ENCODE measurements at regions of chr2 and their contacts with region 1.

Region 1: GRCh38 chr2:181785691-181786344 is 105.5 kb upstream of the NEUROD1 start:
- DNase-seq: peak; percentile 78
- ATAC-seq: peak; percentile 23; the same call in 1 of the 2 replicates
- H3K4me3 ChIP-seq: no peak overlapping the region
- H3K27ac ChIP-seq: peak overlapping the region; percentile 92
- H3K4me1 ChIP-seq: peaks cover 83 to 100% of the 10 kb centered on the region in 2 experiments
- H3K27me3 ChIP-seq: no peaks in the 10 kb centered on the region
- CTCF ChIP-seq: no peak
- POLR2A ChIP-seq: no peak
- RAD21 ChIP-seq: no peak; the same call in 1 of the 2 replicates

Region 2: DNA sequence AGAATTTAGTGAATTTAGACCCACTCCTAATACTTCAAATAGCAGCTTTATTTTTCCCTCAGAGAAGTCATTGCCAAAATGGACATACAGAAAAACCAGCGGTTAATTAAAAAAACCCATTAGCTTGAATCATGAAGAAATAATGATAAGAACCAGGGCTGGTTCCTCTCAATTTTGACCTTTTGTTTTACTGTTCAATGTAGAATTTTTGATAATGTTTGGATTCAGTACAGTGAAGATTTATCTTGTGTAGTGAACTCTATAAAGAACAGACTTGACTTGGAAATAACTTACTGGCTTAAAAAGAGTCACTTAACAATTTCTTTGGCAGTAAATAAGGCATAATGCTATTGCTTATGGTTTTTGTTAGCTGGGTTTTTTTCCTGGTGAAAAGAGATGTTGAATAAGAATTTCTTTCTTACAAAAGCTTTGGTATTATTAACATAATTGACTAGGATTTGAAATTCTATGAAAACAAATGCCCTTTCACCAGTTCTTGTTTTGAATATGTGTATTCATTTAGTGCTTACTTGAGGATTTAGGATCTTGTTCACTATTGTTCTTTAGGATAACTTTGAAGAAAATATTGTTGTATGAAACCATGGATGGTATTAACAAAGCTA is 32.4 kb after region 1 on chr2:
- CTCF ChIA-PET with region 1: no interaction called
- POLR2A ChIA-PET with region 1: interaction called, 10 read pairs
- RAD21 ChIA-PET with region 1: no interaction called
- intact Hi-C with region 1: no loop called
- DNase-seq: no peak
- ATAC-seq: no peak
- H3K4me3 ChIP-seq: no peak overlapping the region
- H3K27ac ChIP-seq: peak overlapping the region; percentile 59; the same call in 1 of the 2 replicates
- H3K4me1 ChIP-seq: peaks cover 67 to 87% of the 10 kb centered on the region in 2 experiments
- H3K27me3 ChIP-seq: no peaks in the 10 kb centered on the region
- CTCF ChIP-seq: no peak
- POLR2A ChIP-seq: no peak
- RAD21 ChIP-seq: no peak

Region 3: DNA sequence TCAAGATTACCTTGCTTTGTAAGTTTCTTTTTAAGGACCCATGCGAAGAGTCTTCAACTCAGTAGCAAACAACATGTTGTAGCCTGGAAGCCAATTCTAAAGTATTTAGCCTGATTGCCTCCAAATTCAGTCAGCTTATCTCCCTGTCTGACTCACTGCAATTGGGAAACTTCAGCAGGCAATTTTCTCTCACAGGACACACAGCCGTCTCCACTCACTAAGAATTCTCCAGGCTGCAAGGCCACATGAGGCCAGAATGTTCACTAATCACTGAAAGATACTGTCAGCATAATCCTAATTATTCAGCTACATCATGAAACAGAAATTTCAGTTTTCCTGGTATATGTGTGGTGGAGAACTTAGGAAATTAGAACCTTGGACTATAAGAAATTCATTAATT is 719.1 kb after region 1 on chr2:
- CTCF ChIA-PET with region 1: no interaction called
- POLR2A ChIA-PET with region 1: no interaction called
- RAD21 ChIA-PET with region 1: no interaction called
- intact Hi-C with region 1: no loop called
- DNase-seq: no peak
- ATAC-seq: no peak
- H3K4me3 ChIP-seq: no peak overlapping the region
- H3K27ac ChIP-seq: no peak overlapping the region
- H3K4me1 ChIP-seq: no peaks in the 10 kb centered on the region
- H3K27me3 ChIP-seq: no peaks in the 10 kb centered on the region
- CTCF ChIP-seq: no peak
- POLR2A ChIP-seq: no peak
- RAD21 ChIP-seq: no peak

Measured in HCT116 (cell line).